IMR-90 (cell line): ENCODE measurements at regions of chr7 and their contacts with region 1.

Region 1: DNA sequence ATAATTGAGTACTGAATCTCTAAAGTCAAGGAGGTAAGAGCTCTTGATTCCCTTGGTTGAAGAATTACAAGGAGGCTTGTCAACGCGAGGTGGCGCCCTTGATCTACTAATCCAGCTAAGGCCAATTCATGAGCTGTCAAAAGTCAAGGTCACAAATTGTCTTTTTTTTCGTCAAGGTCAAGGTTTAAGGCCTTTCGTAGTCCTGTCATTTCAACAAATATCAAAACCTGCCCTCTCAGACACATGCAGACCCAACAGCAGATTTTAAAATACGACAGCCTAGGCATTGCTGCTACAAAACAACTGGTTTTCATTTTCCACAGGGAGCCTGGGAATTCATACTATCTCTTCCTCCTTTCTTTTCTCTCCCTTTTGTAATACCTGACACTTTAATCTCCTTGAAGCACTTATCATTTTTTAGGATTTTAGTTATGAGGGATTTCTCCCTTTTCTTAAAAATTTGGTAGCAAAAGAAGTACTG is 3.6 kb downstream of the HOXA13 start:
- DNase-seq: peak; percentile 71
- ATAC-seq: peak; percentile 41; the same call in 1 of the 2 replicates
- H3K4me3 ChIP-seq: no peak overlapping the region
- H3K27ac ChIP-seq: no peak overlapping the region
- H3K4me1 ChIP-seq: no peaks in the 10 kb centered on the region
- H3K27me3 ChIP-seq: peaks cover 86% of the 10 kb centered on the region
- CTCF ChIP-seq: peak; percentile 84
- POLR2A ChIP-seq: 0 out of 2 replicates have a peak, but pooled peaks have one; percentile 37
- RAD21 ChIP-seq: peak; percentile 94

Region 2: DNA sequence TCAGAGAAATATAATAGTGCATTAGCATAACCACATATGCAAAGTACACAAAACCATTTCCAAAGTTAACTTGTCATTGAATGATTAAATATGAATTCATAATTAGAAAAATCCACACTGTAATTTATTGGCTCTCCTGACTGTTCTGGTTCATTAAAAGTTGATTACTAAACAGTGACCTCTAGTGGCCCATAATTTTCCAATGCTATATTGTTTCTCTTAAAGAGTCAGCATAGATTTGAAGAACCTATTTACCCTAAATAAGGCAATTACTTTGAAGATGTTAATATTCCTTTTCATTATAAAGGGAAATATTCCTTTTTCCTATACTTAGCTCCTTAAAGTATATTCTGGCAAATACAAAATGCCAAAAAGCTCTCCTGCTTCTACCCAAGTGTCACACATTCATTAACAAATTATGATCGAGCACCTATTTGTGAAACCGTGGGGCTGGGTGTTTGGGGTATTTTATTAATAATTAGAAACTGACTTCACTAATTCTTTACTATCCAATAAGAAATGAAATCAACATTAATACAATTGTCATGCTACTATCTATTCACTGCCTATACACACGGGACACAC is 380.1 kb after region 1 on chr7:
- CTCF ChIA-PET with region 1: interaction called, 3 read pairs
- POLR2A ChIA-PET with region 1: no interaction called
- dilution Hi-C with region 1: no loop called
- in situ Hi-C with region 1: loop called (anchors 5 kb)
- intact Hi-C with region 1: loop called (anchors 1 kb)
- DNase-seq: peak; percentile 46
- ATAC-seq: peak; percentile 75
- H3K4me3 ChIP-seq: no peak overlapping the region
- H3K27ac ChIP-seq: no peak overlapping the region
- H3K4me1 ChIP-seq: peaks cover 2% of the 10 kb centered on the region; the same call in 1 of the 2 replicates
- H3K27me3 ChIP-seq: no peaks in the 10 kb centered on the region
- CTCF ChIP-seq: peak; percentile 66
- POLR2A ChIP-seq: no peak
- RAD21 ChIP-seq: peak; percentile 60

Region 3: DNA sequence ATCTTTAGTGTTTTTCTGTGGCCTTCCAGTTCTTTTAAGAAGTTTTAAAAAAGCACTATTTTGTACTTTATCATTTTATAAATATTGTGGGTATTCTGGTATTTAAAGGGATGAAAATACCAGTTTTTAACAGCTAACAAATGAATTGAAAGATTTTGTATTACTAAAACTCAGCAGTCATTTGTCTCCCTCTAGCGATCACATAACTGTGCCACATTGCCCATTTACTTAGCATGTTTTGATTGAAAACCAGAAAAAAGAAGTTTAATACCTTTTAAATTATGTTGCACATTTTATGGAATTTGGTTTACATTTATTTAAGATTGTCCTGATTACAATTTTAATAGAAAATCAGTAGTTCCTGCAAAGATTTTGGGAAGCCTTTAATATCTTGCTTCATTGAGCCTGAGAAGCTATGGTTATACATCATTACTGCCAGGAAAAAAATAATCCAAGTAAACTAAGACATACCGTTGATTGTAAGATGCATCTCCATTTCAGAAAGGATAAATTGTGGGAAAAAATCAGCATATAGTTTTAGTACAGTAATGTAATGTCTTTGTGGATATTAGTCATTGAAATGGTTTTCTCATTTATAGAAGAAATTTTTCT is 578.5 kb after region 1 on chr7:
- CTCF ChIA-PET with region 1: interaction called, 9 read pairs
- POLR2A ChIA-PET with region 1: no interaction called
- dilution Hi-C with region 1: no loop called
- in situ Hi-C with region 1: loop called (anchors 10 kb)
- intact Hi-C with region 1: loop called (anchors 1 kb)
- DNase-seq: peak; percentile 58
- ATAC-seq: peak; percentile 53; the same call in 1 of the 2 replicates
- H3K4me3 ChIP-seq: no peak overlapping the region
- H3K27ac ChIP-seq: no peak overlapping the region
- H3K4me1 ChIP-seq: no peaks in the 10 kb centered on the region
- H3K27me3 ChIP-seq: no peaks in the 10 kb centered on the region
- CTCF ChIP-seq: peak; percentile 69
- POLR2A ChIP-seq: no peak
- RAD21 ChIP-seq: peak; percentile 74

Region 4: GRCh38 chr7:28078036-28078901 is 881.9 kb after region 1 on chr7:
- CTCF ChIA-PET with region 1: no interaction called
- POLR2A ChIA-PET with region 1: no interaction called
- dilution Hi-C with region 1: no loop called
- in situ Hi-C with region 1: loop called (anchors 10 kb)
- intact Hi-C with region 1: loop called (anchors 5 kb)
- DNase-seq: peak; percentile 62
- ATAC-seq: peak; percentile 83
- H3K4me3 ChIP-seq: no peak overlapping the region
- H3K27ac ChIP-seq: no peak overlapping the region
- H3K4me1 ChIP-seq: peaks cover 9% of the 10 kb centered on the region
- H3K27me3 ChIP-seq: no peaks in the 10 kb centered on the region
- CTCF ChIP-seq: peak; percentile 95
- POLR2A ChIP-seq: no peak
- RAD21 ChIP-seq: peak; percentile 79

Region 5: GRCh38 chr7:28853834-28854749 is 1657.8 kb after region 1 on chr7:
- CTCF ChIA-PET with region 1: no interaction called
- POLR2A ChIA-PET with region 1: no interaction called
- dilution Hi-C with region 1: no loop called
- in situ Hi-C with region 1: no loop called
- intact Hi-C with region 1: loop called (anchors 10 kb)
- DNase-seq: peak; percentile 46
- ATAC-seq: peak; percentile 78
- H3K4me3 ChIP-seq: peak overlapping the region; percentile 41
- H3K27ac ChIP-seq: no peak overlapping the region
- H3K4me1 ChIP-seq: peaks cover 9% of the 10 kb centered on the region
- H3K27me3 ChIP-seq: peaks cover 17% of the 10 kb centered on the region
- CTCF ChIP-seq: peak; percentile 73
- POLR2A ChIP-seq: no peak
- RAD21 ChIP-seq: peak; percentile 71